Endothelial cell of umbilical vein (primary cell): ENCODE measurements at regions of chr3 and their contacts with region 1.

Region 1: GRCh38 chr3:152595975-152596790 is 238.7 kb upstream of the P2RY1 start:
- DNase-seq: peak; percentile 97
- H3K4me3 ChIP-seq: peak overlapping the region in 1 of 3 experiments; percentile 42
- H3K27ac ChIP-seq: peak overlapping the region; percentile 78
- H3K4me1 ChIP-seq: peaks cover 14% of the 10 kb centered on the region
- H3K27me3 ChIP-seq: no peaks in the 10 kb centered on the region
- CTCF ChIP-seq: no peak
- POLR2A ChIP-seq: peak; percentile 55

Region 2: GRCh38 chr3:152322756-152323155 is 273.4 kb before region 1 on chr3:
- CTCF ChIA-PET with region 1: no interaction called
- POLR2A ChIA-PET with region 1: no interaction called
- dilution Hi-C with region 1: no loop called
- intact Hi-C with region 1: no loop called
- DNase-seq: peak; percentile 42
- H3K4me3 ChIP-seq: no peak overlapping the region
- H3K27ac ChIP-seq: peak overlapping the region; percentile 42
- H3K4me1 ChIP-seq: peaks cover 89% of the 10 kb centered on the region
- H3K27me3 ChIP-seq: no peaks in the 10 kb centered on the region
- CTCF ChIP-seq: no peak
- POLR2A ChIP-seq: no peak

Region 3: DNA sequence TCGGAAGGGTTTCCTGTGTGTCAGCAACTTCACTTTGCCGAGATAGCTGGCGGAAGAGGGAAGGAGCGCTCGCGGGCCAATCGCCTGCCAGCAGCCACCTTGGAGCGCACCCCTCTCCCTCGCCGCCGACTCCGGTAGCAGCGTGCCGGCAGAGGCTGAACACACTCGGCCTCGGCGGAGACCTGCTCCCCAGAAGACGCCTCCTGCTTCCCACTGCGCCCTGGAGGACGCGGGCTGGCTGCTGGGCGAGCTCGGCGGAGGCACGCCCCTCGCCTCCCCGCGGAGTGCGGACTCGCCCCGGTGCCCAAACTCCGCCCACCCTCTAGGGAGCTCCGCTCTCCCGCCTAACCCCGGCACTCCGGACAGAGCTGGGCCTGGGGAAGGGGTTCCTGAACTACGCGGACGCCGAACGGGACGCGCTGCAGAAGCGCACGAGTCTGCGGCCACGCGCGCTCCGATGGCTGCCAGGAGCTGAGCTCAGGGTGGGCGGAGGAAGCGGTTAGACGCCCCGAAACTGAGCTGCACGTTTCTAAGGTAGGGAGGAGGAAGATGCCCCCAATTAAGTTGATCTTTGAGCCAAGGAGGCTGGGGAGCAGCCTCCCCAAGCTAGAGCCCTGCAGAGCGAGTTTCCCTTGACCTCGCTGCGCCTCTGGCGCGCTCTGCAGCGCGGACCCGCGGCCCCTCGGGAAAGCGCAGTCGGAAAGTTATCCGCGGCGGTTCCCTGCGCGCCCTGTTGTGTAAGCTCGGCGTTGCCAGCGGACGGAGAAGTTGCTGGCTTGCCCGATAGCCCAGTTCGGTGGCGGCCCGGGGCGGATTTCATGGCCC is 238.8 kb after region 1 on chr3 and contains the start of gene P2RY1:
- CTCF ChIA-PET with region 1: interaction called, 3 read pairs
- POLR2A ChIA-PET with region 1: no interaction called
- dilution Hi-C with region 1: no loop called
- intact Hi-C with region 1: loop called (anchors 2 kb)
- DNase-seq: peak; percentile 59
- H3K4me3 ChIP-seq: peak within 1 kb of the TSS; percentile 51 to 77 (median 66)
- H3K27ac ChIP-seq: no peak within 1 kb of the TSS
- H3K4me1 ChIP-seq: peaks cover 6% of the 10 kb centered on the region
- H3K27me3 ChIP-seq: peaks cover 0 to 3% of the 10 kb centered on the region in 2 experiments
- CTCF ChIP-seq: peak; percentile 41 to 54
- POLR2A ChIP-seq: no peak
- total RNA-seq, gene P2RY1: 1.7 and 1.9 TPM in 2 replicates

Region 4: DNA sequence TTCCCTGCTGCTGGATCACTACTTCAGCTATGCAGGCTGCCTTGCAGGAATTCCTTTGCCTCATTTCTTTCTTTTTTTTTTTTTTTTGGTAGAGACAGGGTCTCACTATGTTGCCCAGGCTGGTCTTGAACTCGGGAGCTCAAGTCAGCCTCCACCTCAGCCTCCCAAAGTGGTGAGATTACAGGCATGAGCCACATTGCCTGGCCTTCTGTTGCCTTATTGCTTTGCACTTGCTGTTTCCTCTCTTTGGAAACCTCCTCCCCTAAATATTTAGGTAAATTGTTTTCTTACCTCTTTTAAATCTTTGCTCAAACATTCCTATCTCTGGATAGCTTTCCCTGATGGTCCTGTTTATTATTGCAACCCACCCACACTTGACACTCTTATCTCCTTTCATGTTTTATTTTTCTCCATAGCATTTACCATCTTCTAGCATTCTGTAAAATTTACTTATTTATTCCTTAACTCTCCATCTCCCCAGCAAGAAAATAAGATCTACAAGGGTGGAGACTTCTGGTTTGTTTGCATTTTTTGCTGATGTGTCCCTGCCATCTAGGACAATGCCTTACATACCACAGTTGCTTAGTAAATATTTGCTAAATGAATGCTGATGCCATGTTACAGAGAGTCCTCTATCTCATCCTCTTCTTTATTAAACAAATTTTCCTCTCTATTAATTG is 373.5 kb after region 1 on chr3:
- CTCF ChIA-PET with region 1: no interaction called
- POLR2A ChIA-PET with region 1: no interaction called
- dilution Hi-C with region 1: no loop called
- intact Hi-C with region 1: loop called (anchors 5 kb)
- DNase-seq: no peak
- H3K4me3 ChIP-seq: no peak overlapping the region
- H3K27ac ChIP-seq: no peak overlapping the region
- H3K4me1 ChIP-seq: peaks cover 17% of the 10 kb centered on the region
- H3K27me3 ChIP-seq: no peaks in the 10 kb centered on the region
- CTCF ChIP-seq: no peak
- POLR2A ChIP-seq: no peak

Region 5: DNA sequence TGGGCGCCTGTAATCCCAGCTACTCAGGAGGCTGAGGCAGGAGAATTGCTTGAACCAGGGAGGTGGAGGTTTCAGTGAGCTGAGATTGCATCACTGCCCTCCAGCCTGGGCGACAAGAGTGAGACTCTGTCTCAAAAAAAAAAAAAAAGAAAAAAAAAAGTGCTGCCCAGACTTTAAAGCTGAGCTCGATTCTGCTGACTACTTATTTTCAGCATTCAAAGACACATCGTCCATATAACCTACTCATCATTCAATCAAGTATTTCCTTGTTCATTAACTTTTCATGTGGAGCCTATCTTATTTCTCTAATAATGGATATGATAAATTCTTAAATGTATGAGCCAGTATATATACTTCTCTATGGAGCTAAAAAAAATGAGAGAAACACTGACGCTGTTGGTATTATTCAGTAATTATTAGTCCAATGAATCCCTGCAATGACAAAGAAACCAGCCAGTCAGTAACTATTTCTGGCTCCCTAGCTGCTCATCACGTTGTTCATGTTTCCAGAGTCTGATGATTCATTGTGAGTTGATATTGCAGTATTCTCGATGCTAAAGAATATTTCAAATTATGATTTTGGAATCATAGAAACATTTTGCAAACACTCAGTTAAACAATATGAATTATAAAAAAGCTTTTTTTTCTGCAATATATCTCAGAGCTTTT is 677.7 kb after region 1 on chr3:
- CTCF ChIA-PET with region 1: no interaction called
- POLR2A ChIA-PET with region 1: no interaction called
- dilution Hi-C with region 1: no loop called
- intact Hi-C with region 1: no loop called
- DNase-seq: no peak
- H3K4me3 ChIP-seq: no peak overlapping the region
- H3K27ac ChIP-seq: no peak overlapping the region
- H3K4me1 ChIP-seq: no peaks in the 10 kb centered on the region
- H3K27me3 ChIP-seq: no peaks in the 10 kb centered on the region
- CTCF ChIP-seq: no peak
- POLR2A ChIP-seq: no peak